A549 (cell line): ENCODE measurements at regions of chr7 and their contacts with region 1.

Region 1: DNA sequence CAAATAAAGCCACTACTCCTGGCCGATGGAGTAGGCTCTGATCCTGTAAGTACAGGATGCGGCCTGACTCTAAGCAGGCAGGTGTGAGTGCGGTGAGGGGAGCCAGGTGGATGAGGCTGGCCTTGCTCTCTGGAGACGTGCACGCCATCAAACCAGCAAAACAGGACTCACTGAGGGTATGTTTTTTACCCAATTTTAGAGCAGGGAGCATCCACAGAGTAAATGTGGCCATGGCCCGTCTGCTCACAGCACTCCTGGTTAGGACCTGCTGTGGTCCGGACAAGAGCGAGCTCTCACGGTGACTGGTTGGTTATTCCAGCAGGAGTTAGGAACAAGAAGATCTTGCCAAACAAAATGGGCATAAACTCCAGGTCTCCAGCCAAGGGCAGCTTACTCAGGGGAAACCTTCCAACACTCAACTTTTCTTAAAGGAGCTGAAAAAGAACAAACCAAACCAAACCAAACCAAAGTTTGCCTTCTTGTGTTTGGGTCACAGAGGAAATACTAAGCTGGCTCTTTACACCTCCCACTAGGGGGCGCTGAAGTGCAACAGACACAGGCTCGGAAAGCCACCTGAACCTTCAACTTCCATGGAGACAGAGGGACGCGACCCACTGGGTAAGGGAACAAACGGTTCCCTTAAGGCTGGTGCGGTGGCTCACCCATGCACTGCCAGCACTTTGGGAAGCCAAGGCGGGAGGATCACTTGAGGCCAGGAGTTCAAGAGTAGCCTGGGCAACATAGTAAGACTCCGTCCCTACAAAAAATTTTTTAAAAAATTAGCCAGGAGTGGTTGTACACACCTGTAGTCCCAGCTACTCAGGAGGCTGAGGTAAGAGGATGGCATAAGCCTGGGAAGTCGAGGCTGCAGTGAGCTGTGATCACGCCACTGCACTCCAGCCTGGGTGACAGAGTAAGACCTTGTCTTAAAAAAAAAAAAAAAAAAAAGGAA is 122.4 kb downstream of the CLEC2L start:
- DNase-seq: peak; percentile 62 to 84
- ATAC-seq: peak; percentile 83 to 84; a peak in 5 of 6 replicates
- H3K4me3 ChIP-seq: no peak overlapping the region
- H3K27ac ChIP-seq: peak overlapping the region; percentile 63 to 74; a peak in 5 of 6 replicates
- H3K4me1 ChIP-seq: peaks cover 43% of the 10 kb centered on the region
- CTCF ChIP-seq: peak; percentile 92
- EP300 ChIP-seq: no peak
- POLR2A ChIP-seq: no peak
- RAD21 ChIP-seq: peak; percentile 96

Region 2: GRCh38 chr7:139620676-139621344 is 25.0 kb before region 1 on chr7:
- CTCF ChIA-PET with region 1: interaction called, 63 read pairs
- POLR2A ChIA-PET with region 1: no interaction called
- DNase-seq: peak; percentile 48 to 65
- ATAC-seq: peak; percentile 76 to 90
- H3K4me3 ChIP-seq: no peak overlapping the region
- H3K27ac ChIP-seq: no peak overlapping the region
- H3K4me1 ChIP-seq: peaks cover 7% of the 10 kb centered on the region; the same call in 1 of the 3 replicates
- CTCF ChIP-seq: peak; percentile 60
- EP300 ChIP-seq: no peak
- POLR2A ChIP-seq: no peak
- RAD21 ChIP-seq: peak; percentile 58 to 66

Region 3: GRCh38 chr7:139660317-139661042 is 14.6 kb after region 1 on chr7:
- CTCF ChIA-PET with region 1: interaction called, 68 read pairs
- POLR2A ChIA-PET with region 1: no interaction called
- DNase-seq: no peak
- ATAC-seq: no peak
- H3K4me3 ChIP-seq: no peak overlapping the region
- H3K27ac ChIP-seq: peak overlapping the region in 1 of 2 experiments; percentile 35; a peak in 4 of 6 replicates
- H3K4me1 ChIP-seq: peaks cover 12% of the 10 kb centered on the region; the same call in 2 of the 3 replicates
- CTCF ChIP-seq: no peak
- EP300 ChIP-seq: no peak
- POLR2A ChIP-seq: no peak
- RAD21 ChIP-seq: no peak

Region 4: GRCh38 chr7:139753081-139753692 is 107.3 kb after region 1 on chr7:
- CTCF ChIA-PET with region 1: interaction called, 26 read pairs
- POLR2A ChIA-PET with region 1: no interaction called
- DNase-seq: peak; percentile 36 to 70
- ATAC-seq: peak; percentile 91 to 96
- H3K4me3 ChIP-seq: no peak overlapping the region
- H3K27ac ChIP-seq: peak overlapping the region; percentile 59 to 80
- H3K4me1 ChIP-seq: peaks cover 39% of the 10 kb centered on the region
- CTCF ChIP-seq: no peak
- EP300 ChIP-seq: no peak
- POLR2A ChIP-seq: no peak
- RAD21 ChIP-seq: peak; percentile 3 to 6; a peak in 1 of 5 replicates

Region 5: GRCh38 chr7:139783647-139784385 is 138.0 kb after region 1 on chr7:
- CTCF ChIA-PET with region 1: interaction called, 35 read pairs
- POLR2A ChIA-PET with region 1: interaction called, 4 read pairs
- DNase-seq: no peak
- ATAC-seq: peak; percentile 42 to 69; a peak in 4 of 6 replicates
- H3K4me3 ChIP-seq: no peak overlapping the region
- H3K27ac ChIP-seq: peak overlapping the region in 1 of 2 experiments; percentile 17; a peak in 1 of 6 replicates
- H3K4me1 ChIP-seq: peaks cover 22% of the 10 kb centered on the region
- CTCF ChIP-seq: no peak
- EP300 ChIP-seq: no peak
- POLR2A ChIP-seq: no peak
- RAD21 ChIP-seq: no peak